AG04450 (cell line): ENCODE measurements at regions of chr13 and their contacts with region 1.

Region 1: GRCh38 chr13:49443704-49444523 is at the starts of genes CAB39L and SETDB2:
- DNase-seq: peak; percentile 98
- H3K4me3 ChIP-seq: peak within 1 kb of the TSS; percentile 93
- H3K27ac ChIP-seq: peak within 1 kb of the TSS; percentile 97
- H3K27me3 ChIP-seq: no peaks in the 10 kb centered on the region
- CTCF ChIP-seq: peak; percentile 43
- polyA plus RNA-seq, gene CAB39L: 21.2 and 26.3 TPM in 2 replicates
- polyA plus RNA-seq, gene SETDB2: 14.8 and 21.7 TPM in 2 replicates

Region 2: DNA sequence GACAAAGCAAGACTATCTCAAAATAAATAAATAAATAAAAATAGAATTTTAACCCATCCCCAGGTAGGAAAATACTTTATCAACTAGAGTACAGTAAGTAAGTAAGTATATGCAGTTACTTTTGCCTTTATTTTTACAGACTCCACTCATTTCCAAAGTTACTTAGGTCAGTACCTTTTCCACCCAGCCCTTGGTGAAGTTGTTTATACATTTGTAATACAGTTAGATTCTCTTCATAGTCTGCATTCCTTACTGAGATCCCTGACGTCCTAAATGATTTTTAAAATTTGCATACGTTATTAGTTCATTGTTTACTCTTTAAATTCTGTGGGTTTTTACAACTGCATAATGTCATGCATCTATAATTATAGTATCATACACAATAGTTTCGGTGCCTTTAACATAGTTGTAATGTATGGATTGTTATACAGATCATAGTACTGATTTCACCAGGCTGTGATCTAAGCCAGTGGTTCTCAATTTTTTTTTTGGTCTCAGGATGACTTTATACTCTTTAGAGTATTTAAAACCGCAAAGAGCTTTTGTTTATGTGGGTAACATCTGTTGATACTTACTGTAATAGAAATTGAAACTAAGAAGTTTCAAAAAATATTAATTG is 10.6 kb after region 1 on chr13:
- CTCF ChIA-PET with region 1: interaction called, 5 read pairs
- POLR2A ChIA-PET with region 1: interaction called, 34 read pairs
- DNase-seq: peak; percentile 77
- H3K4me3 ChIP-seq: peak overlapping the region; percentile 29; the same call in 1 of the 2 replicates
- H3K27ac ChIP-seq: peak overlapping the region; percentile 90
- H3K27me3 ChIP-seq: no peaks in the 10 kb centered on the region
- CTCF ChIP-seq: no peak

Region 3: DNA sequence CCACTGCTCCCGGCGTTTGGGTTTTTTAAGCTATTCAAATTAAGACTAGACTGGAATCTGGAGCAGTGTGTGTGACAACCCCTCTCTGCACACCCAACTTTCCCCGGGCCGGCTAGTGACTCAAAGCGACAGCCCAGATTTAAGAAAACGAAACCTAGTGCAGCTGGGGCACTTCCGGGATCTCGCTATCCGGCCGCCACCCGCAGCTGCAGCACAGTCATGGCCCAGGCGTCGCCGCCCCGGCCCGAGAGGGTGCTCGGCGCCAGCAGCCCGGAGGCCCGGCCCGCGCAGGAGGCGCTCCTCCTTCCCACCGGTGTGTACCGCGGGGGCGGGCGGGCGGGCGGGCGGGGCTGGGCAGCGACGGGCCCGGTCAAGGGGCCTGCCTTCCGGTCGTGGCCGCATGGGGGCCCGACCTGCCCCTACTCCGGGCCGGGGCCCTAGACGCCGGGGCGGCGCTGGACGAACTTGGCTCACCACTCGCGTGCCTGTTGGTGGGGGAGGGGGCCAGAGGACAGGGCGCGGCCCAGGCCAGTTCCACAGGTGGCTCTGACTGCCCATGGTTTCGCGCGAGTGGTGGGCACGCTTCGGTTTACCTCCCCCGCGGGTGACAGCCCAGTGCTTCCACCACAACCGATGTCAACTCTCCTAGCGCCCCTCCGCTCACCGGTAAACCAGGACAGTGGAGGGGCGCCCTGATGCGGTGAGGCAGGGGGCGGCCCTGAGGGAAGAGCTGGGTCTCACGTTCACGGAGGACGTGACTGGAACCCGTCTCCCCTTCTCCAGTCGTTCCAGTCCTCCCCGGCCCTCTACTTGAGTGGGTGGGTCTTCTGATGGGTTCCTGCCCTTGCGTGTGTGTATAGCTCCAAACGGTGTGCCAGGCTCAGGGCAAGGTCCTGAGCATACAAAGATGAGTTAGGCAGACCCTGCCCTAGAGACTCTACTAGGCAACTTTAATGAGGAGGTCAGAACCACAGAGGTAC is 52.2 kb after region 1 on chr13 and contains the start of gene PHF11:
- CTCF ChIA-PET with region 1: no interaction called
- POLR2A ChIA-PET with region 1: interaction called, 22 read pairs
- DNase-seq: no peak
- H3K4me3 ChIP-seq: peak within 1 kb of the TSS; percentile 59
- H3K27ac ChIP-seq: peak within 1 kb of the TSS; percentile 82
- H3K27me3 ChIP-seq: no peaks in the 10 kb centered on the region
- CTCF ChIP-seq: no peak
- polyA plus RNA-seq, gene PHF11: 22.1 and 26.2 TPM in 2 replicates